ENCODE measurements at regions of chr1 and their contacts with region 1.

Region 1: DNA sequence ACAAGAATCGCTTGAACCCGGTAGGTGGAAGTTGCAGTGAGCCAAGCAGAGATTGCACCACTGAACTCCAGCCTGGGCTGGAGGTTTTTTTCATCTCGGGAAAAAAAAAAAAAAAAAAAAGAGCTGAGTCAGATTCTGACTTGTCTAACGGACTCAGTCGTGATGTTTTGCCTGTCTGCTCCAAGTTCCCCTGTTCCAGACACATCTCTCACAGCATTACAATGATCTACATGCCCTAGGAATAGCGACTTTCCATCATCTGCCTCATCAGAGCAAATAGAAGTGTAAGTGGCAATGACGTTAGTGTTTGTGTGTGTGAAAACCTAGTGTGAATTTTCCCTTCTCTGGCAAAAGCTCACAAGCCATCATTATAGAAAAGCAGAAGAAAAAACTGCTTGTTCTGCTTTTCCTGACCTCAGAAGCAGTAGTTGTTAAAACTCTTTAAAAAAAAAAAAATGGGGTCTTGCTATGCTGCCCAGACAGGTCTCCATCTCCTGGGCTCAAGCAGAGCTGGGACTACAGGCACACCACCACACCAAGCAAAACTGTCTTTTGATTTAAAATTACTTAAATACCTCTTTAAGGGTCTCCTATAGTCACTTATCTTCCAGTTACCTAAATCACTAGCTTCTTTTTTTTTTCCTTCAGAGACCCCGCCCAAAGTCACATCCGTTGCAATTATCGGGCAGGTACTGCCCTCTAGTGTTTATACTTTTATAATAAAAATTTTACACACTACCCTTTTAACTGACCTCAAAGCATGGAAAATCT is 37.3 kb downstream of the PLEKHO1 start:
- DNase-seq: no peak
- H3K4me3 ChIP-seq: no peak overlapping the region
- H3K27me3 ChIP-seq: no peaks in the 10 kb centered on the region
- CTCF ChIP-seq: peak; percentile 39

Region 2: GRCh38 chr1:149886396-149887195 is 300.4 kb before region 1 on chr1:
- CTCF ChIA-PET with region 1: interaction called, 3 read pairs
- POLR2A ChIA-PET with region 1: interaction called, 15 read pairs
- DNase-seq: peak; percentile 98
- H3K4me3 ChIP-seq: peak overlapping the region; percentile 67
- H3K27me3 ChIP-seq: no peaks in the 10 kb centered on the region
- CTCF ChIP-seq: no peak

Region 3: GRCh38 chr1:150072959-150073358 is 114.0 kb before region 1 on chr1:
- CTCF ChIA-PET with region 1: interaction called, 25 read pairs
- POLR2A ChIA-PET with region 1: no interaction called
- DNase-seq: no peak
- H3K4me3 ChIP-seq: no peak overlapping the region
- H3K27me3 ChIP-seq: no peaks in the 10 kb centered on the region
- CTCF ChIP-seq: peak; percentile 38; the same call in 1 of the 2 replicates

Region 4: DNA sequence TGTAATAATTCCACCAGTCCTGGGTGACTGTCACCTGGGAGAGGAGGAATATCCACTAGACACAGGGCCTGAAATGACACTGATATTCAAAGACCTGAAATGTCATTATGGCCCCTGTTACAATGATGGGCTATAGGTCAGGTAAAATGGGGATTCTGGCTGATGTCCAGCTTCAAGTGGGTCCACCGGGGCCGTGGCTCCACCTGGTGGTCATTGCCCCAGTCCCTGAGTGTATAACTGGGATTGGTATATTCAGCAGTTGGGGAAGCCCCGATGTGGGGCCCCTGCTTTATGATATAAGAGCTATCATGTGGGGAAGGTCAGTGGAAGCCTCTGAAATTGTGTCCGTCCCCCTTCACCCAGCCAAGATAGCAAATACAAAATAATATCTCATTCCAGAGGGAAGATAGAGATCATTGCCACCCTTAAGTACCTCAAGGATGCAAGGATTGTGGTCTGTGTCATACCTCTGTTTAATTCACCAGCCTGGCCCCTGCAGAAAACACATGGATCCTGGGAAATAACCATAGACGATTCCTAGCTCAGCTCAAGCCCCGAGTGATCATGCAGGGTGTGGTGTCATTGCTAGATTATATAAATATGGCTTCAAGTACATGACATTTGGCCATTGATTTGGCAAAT is 17.9 kb before region 1 on chr1:
- CTCF ChIA-PET with region 1: interaction called, 26 read pairs
- POLR2A ChIA-PET with region 1: no interaction called
- DNase-seq: no peak
- H3K4me3 ChIP-seq: no peak overlapping the region
- H3K27me3 ChIP-seq: no peaks in the 10 kb centered on the region
- CTCF ChIP-seq: peak; percentile 85

Region 5: GRCh38 chr1:150176593-150176992 is 10.4 kb before region 1 on chr1:
- CTCF ChIA-PET with region 1: interaction called, 24 read pairs
- POLR2A ChIA-PET with region 1: no interaction called
- DNase-seq: no peak
- H3K4me3 ChIP-seq: no peak overlapping the region
- H3K27me3 ChIP-seq: no peaks in the 10 kb centered on the region
- CTCF ChIP-seq: no peak

Region 6: GRCh38 chr1:150429805-150430204 is 242.8 kb after region 1 on chr1:
- CTCF ChIA-PET with region 1: no interaction called
- POLR2A ChIA-PET with region 1: no interaction called
- DNase-seq: no peak
- H3K4me3 ChIP-seq: no peak overlapping the region
- H3K27me3 ChIP-seq: no peaks in the 10 kb centered on the region
- CTCF ChIP-seq: peak; percentile 13; the same call in 1 of the 2 replicates

Region 7: DNA sequence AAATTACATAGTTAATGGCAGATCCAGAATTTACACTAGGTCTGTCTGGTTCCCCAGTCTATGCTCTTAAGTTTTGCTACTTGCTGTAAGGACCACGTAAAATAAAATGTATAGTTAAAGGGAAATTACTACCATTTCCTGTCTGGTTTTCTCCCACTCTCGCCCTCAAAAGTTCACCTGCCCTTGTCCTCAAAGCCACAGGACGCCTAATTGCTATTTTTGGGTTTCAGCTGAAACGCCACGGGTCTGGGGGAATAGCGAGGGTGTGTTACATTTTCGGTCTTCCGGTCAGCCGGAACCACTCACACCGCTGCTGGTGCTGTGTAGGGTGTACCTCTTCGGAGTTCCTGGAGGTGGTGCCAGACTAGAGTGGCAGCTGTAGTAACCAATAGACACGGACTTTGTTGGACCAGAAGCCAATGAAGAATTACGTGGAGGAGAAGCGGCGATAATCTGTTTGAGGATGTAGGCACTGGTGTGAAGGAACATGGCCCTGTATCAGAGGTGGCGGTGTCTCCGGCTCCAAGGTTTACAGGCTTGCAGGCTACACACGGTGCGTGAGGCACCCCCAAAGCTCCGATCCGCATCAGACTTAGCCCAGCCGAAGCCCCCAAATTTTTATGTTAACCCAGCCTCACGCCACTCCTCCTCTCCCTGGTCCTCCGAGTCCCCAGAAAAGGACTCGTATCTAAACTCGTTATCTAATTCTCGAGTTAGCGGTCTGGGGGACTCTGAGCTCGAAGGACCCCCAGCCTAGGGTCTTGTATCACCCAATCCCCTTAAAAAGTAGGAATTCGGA is 300.2 kb after region 1 on chr1 and contains the start of gene TARS2:
- CTCF ChIA-PET with region 1: no interaction called
- POLR2A ChIA-PET with region 1: no interaction called
- DNase-seq: peak; percentile 90
- H3K4me3 ChIP-seq: peak within 1 kb of the TSS; percentile 71
- H3K27me3 ChIP-seq: no peaks in the 10 kb centered on the region
- CTCF ChIP-seq: 0 out of 2 replicates have a peak, but pooled peaks have one; percentile 16
- polyA plus RNA-seq, gene TARS2: 12.6 and 17.7 TPM in 2 replicates